ENCODE measurements at regions of chr11 and their contacts with region 1.

Region 1: DNA sequence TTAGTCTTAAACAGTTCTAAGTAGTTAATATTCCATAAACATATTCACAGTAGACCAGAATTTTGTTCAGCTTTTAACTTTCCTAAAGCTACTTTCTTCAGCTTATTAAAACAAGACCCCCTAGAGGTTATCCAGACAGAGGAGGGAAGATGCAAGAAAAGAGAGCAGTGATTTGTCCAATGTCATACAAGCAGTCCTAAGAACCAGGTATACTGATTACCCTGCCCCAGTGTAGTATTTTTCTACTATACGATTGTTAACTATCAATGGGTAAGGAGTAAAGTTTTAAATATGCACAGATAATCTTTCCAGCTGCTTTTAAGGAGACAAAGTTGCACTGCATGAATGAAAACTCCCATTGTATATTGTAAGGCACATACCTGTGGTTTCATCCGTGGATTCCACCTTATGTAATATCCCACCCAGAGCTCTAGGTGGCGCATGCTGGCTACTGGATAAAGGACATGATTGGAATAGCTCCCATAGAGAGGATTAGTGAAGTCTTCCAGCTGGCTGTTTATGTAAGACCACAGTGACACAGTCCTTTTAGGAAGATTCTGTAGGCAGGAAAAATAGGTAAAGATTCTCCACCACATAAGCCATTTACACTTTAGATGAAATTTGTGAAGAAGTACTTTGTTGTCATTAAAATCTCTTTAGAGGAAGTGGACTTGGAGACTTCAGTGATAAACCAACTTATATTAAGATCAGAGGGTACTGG is 45.6 kb downstream of the CEP57 start:
- DNase-seq: peak; percentile 94
- ATAC-seq: peak; percentile 61
- H3K4me3 ChIP-seq: no peak overlapping the region
- H3K27ac ChIP-seq: no peak overlapping the region
- H3K4me1 ChIP-seq: peaks cover 38% of the 10 kb centered on the region
- H3K27me3 ChIP-seq: no peaks in the 10 kb centered on the region
- CTCF ChIP-seq: peak; percentile 99

Region 2: DNA sequence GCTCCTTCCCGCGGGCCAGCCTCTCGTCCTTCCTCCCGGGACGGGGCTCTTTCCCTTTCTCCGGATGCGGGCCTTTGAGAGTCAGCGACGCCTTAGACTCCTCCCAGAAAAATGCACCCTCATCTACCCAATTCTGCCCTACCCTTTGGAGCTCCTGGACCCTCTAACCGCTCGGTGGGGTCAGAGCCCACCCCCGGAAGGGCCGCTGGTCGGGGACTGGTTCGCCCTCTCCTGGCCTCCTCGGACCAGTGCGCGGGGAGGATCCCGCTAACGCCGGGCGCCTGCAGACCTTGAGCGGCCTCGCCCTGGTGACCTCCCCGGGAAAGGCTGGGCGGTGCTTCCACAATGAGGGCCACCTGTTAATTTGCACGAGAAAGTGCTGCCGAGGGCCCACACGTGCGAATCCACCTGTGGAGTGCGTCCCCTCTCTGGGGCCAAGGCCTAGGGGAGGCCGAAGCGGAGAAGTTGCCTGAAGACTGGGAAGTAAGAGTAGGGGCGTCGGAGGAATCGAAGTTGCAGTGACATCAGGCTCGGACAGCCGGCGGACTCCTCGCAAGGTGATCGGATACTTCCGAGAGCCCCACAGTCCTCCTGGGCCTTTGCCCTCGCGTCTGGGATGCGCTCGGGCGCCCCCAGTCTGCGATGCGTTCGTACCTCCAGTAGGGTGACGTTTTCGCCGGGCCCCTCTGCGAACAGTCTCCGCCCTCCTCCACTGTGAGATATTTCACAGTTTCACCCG is 684.8 kb before region 1 on chr11:
- CTCF ChIA-PET with region 1: no interaction called
- POLR2A ChIA-PET with region 1: no interaction called
- intact Hi-C with region 1: loop called (anchors 5 kb)
- DNase-seq: peak; percentile 98
- ATAC-seq: peak; percentile 68
- H3K4me3 ChIP-seq: peak overlapping the region; percentile 71
- H3K27ac ChIP-seq: peak overlapping the region; percentile 60
- H3K4me1 ChIP-seq: peaks cover 44% of the 10 kb centered on the region
- H3K27me3 ChIP-seq: no peaks in the 10 kb centered on the region
- CTCF ChIP-seq: peak; percentile 60

Region 3: GRCh38 chr11:95688580-95689189 is 147.2 kb before region 1 on chr11:
- CTCF ChIA-PET with region 1: no interaction called
- POLR2A ChIA-PET with region 1: no interaction called
- intact Hi-C with region 1: no loop called
- DNase-seq: no peak
- ATAC-seq: no peak
- H3K4me3 ChIP-seq: no peak overlapping the region
- H3K27ac ChIP-seq: no peak overlapping the region
- H3K4me1 ChIP-seq: no peaks in the 10 kb centered on the region
- H3K27me3 ChIP-seq: peaks cover 33% of the 10 kb centered on the region
- CTCF ChIP-seq: no peak

Region 4: DNA sequence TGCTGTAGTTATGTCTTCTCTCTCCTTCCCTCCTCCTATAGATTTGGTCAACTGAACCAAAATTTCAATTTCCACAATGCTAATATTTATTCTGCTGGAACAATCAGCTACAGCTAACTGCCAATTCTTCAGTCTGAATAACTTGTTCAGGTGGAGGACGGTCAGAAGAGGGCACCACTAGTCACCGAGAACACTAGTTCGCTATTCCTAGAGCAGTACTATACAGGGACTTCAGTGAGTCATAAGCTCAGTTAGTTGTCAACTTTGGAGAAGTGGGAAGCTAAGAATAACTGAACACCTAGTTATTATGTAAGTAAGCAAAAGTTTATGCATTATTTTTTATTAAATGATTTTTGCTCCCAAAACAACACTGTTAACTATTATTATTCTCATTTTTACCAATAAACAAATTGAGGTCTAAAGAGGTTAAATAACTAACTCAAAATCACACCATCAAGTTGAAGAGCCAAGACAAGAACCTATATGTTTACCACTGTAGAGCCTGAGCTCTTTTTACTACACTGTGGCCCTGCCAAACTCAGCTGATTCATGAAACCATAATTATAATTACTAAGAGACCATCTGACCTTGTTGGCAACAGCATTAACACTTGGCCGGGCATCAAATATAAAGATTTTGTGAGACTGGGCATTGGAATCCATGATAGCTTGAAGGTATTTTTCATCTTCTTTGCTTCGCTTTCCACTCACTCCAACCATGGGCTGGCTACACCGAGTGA is 13.3 kb after region 1 on chr11:
- CTCF ChIA-PET with region 1: interaction called, 19 read pairs
- POLR2A ChIA-PET with region 1: no interaction called
- intact Hi-C with region 1: no loop called
- DNase-seq: peak; percentile 88
- ATAC-seq: peak; percentile 86
- H3K4me3 ChIP-seq: peak overlapping the region; percentile 26; the same call in 1 of the 2 replicates
- H3K27ac ChIP-seq: peak overlapping the region; percentile 77
- H3K4me1 ChIP-seq: peaks cover 30% of the 10 kb centered on the region
- H3K27me3 ChIP-seq: no peaks in the 10 kb centered on the region
- CTCF ChIP-seq: peak; percentile 92

Region 5: DNA sequence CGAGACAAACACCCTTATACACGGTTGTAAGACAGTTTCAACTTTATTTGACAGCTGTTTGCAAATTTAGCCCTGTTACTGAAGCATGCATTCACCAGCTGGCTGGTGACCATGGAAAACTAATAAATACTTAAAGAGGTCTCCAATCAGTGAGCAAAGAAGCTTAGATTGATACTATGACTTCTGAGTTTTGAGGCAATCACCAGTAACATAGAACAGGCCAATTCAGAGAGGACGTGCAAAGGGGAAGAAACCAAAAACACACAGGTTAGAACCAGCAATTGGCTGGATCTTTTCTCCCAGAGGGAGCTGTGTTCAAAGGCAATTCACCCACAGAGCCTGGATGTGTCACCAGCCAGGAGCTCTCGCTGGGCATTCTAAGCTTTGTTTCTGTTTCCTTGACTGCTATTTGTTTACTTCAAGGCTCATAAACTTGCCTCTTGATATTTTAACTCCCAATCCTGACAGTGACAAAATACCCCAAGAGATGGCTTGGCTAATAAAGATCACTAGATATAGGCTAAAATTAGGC is 201.5 kb after region 1 on chr11:
- CTCF ChIA-PET with region 1: interaction called, 4 read pairs
- POLR2A ChIA-PET with region 1: no interaction called
- intact Hi-C with region 1: loop called (anchors 2 kb)
- DNase-seq: peak; percentile 95
- ATAC-seq: peak; percentile 69
- H3K4me3 ChIP-seq: peak overlapping the region; percentile 53
- H3K27ac ChIP-seq: peak overlapping the region; percentile 91
- H3K4me1 ChIP-seq: peaks cover 49% of the 10 kb centered on the region
- H3K27me3 ChIP-seq: no peaks in the 10 kb centered on the region
- CTCF ChIP-seq: peak; percentile 53

Region 6: DNA sequence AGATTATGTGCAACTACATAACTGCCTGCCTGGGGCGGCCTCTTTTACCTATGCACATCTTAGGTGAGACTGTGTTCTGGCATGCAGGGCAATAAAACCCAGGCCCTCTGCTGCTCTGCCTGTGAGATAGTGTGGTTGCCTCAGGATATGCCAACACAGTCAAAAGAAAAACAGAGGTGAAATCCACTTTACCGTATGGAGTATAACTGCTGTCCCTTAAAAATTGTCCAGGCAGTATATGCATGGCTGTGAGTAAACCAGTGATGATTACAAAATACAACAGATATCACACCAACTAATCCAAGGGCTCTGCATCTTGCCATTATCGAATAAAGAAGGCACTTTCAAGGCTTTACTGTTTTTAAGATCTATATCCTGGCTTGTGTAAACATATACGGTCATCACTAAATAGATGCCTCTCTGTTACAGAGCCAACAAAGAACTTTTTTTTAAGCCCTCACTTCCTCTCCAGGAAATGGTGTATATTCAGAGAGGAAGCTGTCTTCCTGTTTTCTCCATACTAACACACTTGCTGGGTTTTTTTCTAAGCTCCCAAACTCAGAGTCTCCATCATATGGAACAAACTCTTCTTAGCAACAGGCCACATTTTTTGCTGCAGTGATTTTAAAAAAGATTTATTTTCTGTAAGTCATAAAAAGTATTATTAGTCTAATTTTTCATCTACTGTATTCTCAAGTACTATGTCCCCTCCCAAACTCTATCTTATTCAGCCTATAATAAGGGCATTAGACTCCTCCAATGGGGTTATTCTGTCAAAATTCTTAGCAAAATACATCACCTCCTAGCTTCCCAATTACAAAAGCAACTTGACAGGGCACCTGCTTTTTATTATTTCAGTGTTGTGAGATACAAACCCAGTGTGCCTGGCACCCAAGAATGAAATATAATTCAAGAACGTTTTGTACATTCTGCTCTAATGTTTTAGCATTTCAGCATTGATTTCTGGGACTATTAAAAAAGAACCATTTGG is 371.8 kb after region 1 on chr11:
- CTCF ChIA-PET with region 1: no interaction called
- POLR2A ChIA-PET with region 1: interaction called, 4 read pairs
- intact Hi-C with region 1: loop called (anchors 10 kb)
- DNase-seq: peak; percentile 92
- ATAC-seq: peak; percentile 92
- H3K4me3 ChIP-seq: peak overlapping the region; percentile 37
- H3K27ac ChIP-seq: peak overlapping the region; percentile 85
- H3K4me1 ChIP-seq: peaks cover 36% of the 10 kb centered on the region
- H3K27me3 ChIP-seq: no peaks in the 10 kb centered on the region
- CTCF ChIP-seq: no peak